ENCODE measurements at regions of chr11 and their contacts with region 1.

Region 1: DNA sequence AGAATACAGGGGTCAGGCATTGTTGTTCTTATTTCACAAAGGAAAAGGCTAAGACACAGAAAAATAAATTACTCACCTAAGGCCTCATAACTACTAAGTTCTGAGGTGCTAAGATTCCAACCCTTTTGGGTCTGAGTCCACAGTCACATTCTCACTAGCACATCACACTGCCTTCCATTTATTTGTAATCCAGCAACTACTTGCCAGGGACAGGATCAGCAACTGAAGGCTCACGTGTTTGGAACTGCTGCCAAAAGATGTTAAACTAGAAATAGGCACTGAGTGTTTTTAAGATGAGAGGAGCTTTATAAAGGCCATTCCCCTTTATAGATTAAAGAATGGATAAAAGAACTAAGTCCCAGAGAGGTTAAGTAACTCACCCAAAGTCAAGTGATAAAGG is 58.0 kb downstream of the CADM1 start:
- DNase-seq: no peak
- ATAC-seq: no peak
- H3K4me3 ChIP-seq: no peak overlapping the region
- H3K27ac ChIP-seq: no peak overlapping the region
- H3K4me1 ChIP-seq: peaks cover 8% of the 10 kb centered on the region
- H3K27me3 ChIP-seq: no peaks in the 10 kb centered on the region
- CTCF ChIP-seq: no peak
- EP300 ChIP-seq: no peak
- POLR2A ChIP-seq: no peak
- RAD21 ChIP-seq: no peak

Region 2: GRCh38 chr11:115473167-115473566 is 27.0 kb after region 1 on chr11:
- CTCF ChIA-PET with region 1: no interaction called
- POLR2A ChIA-PET with region 1: no interaction called
- in situ Hi-C with region 1: no loop called
- intact Hi-C with region 1: loop called (anchors 1 kb)
- DNase-seq: no peak
- ATAC-seq: no peak
- H3K4me3 ChIP-seq: no peak overlapping the region
- H3K27ac ChIP-seq: no peak overlapping the region
- H3K4me1 ChIP-seq: peaks cover 46% of the 10 kb centered on the region
- H3K27me3 ChIP-seq: no peaks in the 10 kb centered on the region
- CTCF ChIP-seq: no peak
- EP300 ChIP-seq: no peak
- POLR2A ChIP-seq: no peak
- RAD21 ChIP-seq: no peak

Measured in HepG2 (cell line).